Esophagus muscularis mucosa (tissue), 4 donors: ENCODE measurements at regions of chr10 and their contacts with region 1.

Region 1: DNA sequence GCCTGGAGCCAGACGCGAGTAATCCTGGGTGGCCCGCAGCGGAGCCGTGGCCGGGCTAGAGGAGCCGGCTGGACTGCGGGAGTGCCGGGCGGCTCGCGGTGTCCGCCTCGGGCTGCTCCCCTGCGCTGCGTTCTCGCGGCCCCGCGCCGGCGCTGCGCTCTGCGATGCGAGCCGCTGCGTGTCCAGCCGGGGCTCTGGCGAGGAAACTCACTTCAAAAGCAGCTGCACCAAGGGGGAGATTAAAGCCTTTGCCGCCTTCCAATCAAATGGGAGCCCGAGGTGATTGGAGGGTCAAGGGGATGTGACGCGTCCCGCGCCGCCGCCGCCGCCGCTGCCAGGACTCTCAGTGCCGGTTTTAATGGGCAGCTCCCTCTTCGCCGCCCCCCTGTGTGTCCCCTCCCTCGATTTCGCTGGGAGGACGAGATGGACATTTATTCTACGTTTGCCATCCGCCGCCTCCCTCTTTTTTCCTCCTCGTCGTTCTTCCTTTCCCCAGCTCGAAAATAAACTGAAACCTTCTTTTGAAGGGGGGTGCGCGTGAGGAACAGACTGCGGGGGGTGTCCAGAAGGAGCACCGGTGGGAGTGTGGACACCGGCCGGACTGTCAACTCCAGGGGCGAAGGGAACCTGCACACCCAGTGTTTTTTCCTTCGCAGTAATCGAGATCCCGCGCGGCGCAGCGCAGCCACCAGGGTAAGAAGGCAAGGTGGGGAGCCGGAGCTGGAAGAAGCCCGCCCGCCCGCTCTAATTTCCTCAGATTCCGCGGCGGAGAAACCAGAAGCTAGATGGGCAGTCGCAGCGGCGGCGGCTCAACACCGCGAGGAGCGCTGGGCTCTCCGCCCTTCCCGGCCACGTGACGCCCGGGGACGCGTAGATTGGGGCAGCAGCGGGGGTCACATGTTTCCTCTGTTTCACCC is at the start of gene ZNF503:
- DNase-seq: peak; percentile 99
- H3K4me3 ChIP-seq: peak within 1 kb of the TSS; percentile 86 to 100 (median 96)
- H3K27ac ChIP-seq: peak within 1 kb of the TSS; percentile 99 to 100 (median 100)
- H3K4me1 ChIP-seq: peaks cover 18 to 53% (median 45%) of the 10 kb centered on the region in 4 donors
- H3K27me3 ChIP-seq: peaks cover 0 to 11% (median 0%) of the 10 kb centered on the region in 4 donors
- CTCF ChIP-seq: peak in 2 of 3 experiments; percentile 32 to 42
- EP300 ChIP-seq: no peak
- POLR2A ChIP-seq: peak; percentile 84
- total RNA-seq, gene ZNF503: 21.2 to 101 (median 65.1) TPM

Region 2: DNA sequence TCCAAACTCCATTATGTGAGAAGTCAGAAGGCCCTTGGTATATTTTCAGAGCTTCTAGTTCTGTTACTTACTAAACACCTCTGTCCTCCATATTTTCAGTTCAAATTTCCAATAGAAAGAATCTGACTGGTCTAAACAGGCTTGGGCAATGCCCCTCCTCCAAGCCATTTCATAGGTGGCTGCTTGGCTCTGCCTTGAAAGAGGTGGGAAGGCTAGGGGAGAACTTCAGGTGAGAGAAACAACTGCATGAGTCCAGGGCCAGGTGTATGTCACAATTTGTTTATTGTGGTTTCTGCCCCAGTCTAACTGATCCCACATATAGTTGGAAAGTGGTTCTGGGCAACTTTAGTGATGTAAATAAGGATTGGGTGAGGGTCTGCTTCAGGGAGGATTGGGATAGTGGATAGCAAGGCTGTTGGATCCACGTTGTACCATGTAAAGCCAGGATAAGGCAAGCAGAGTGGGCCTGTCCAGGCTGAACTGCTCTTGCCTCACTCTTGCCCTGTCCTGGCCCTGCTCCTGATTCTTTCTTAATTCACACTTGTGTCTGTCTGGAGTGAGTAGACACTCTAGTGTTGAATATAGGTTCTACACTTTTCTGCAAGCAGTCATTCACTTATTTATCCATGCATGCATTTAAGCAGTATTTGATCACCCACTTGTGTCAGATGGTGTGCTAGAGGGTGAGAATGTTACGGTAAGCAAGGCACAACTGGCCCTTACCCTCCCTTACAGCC is 98.6 kb before region 1 on chr10:
- intact Hi-C with region 1: no loop called
- DNase-seq: no peak
- H3K4me3 ChIP-seq: no peak overlapping the region
- H3K27ac ChIP-seq: no peak overlapping the region
- H3K4me1 ChIP-seq: no peaks in the 10 kb centered on the region
- H3K27me3 ChIP-seq: no peaks in the 10 kb centered on the region
- CTCF ChIP-seq: no peak
- EP300 ChIP-seq: no peak
- POLR2A ChIP-seq: no peak

Region 3: DNA sequence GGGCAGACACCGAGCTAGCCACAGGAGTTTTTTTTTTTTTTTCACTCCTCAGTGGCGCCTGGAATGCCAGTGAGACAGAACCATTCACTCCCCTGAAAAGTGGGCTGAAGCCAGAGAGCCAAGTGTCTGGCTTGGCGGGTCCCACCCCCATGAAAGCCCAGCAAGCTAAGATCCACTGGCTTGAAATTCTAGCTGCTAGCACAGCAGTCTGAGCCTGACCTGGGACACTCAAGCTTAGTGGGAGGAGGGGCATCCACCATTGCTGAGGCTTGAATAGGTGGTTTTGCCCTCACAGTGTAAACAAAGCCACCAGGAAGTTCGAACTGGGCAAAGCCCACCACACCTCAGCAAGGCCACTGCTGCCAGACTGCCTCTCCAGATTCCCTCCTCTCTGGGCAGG is 174.1 kb after region 1 on chr10:
- intact Hi-C with region 1: no loop called
- DNase-seq: no peak
- H3K4me3 ChIP-seq: no peak overlapping the region
- H3K27ac ChIP-seq: no peak overlapping the region
- H3K4me1 ChIP-seq: no peaks in the 10 kb centered on the region
- H3K27me3 ChIP-seq: no peaks in the 10 kb centered on the region
- CTCF ChIP-seq: no peak
- EP300 ChIP-seq: no peak
- POLR2A ChIP-seq: no peak

Region 4: GRCh38 chr10:75612904-75613684 is 211.3 kb after region 1 on chr10:
- intact Hi-C with region 1: loop called (anchors 5 kb)
- DNase-seq: no peak
- H3K4me3 ChIP-seq: no peak overlapping the region
- H3K27ac ChIP-seq: peak overlapping the region; percentile 1 to 56 (median 28)
- H3K4me1 ChIP-seq: peaks cover 20 to 53% (median 49%) of the 10 kb centered on the region in 4 donors
- H3K27me3 ChIP-seq: no peaks in the 10 kb centered on the region
- CTCF ChIP-seq: no peak
- EP300 ChIP-seq: no peak
- POLR2A ChIP-seq: no peak

Region 5: DNA sequence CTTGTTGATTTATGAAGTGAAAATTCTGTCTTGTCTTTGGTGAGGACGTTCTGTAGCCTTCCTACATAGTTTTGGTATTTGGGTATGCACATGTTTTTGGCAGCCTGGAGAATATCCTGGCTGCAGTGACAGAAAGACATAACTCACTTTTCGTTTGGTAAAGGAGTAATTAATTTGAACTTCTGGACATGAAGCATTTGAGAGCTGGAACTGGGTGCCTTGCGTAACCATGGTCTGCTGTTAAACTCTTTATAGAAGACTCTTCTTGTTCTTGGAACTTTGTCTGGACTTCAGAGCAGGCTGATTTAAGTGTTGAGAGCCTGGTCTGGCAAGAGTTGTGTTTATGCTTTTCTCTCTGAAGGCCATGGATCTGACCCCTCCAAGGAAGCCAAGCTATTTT is 260.9 kb after region 1 on chr10:
- intact Hi-C with region 1: loop called (anchors 5 kb)
- DNase-seq: peak; percentile 93
- H3K4me3 ChIP-seq: peak overlapping the region in 1 of 4 donors; percentile 5
- H3K27ac ChIP-seq: peak overlapping the region; percentile 77 to 86 (median 84)
- H3K4me1 ChIP-seq: peaks cover 27 to 79% (median 70%) of the 10 kb centered on the region in 4 donors
- H3K27me3 ChIP-seq: no peaks in the 10 kb centered on the region
- CTCF ChIP-seq: no peak
- EP300 ChIP-seq: peak; percentile 67
- POLR2A ChIP-seq: no peak

Region 6: DNA sequence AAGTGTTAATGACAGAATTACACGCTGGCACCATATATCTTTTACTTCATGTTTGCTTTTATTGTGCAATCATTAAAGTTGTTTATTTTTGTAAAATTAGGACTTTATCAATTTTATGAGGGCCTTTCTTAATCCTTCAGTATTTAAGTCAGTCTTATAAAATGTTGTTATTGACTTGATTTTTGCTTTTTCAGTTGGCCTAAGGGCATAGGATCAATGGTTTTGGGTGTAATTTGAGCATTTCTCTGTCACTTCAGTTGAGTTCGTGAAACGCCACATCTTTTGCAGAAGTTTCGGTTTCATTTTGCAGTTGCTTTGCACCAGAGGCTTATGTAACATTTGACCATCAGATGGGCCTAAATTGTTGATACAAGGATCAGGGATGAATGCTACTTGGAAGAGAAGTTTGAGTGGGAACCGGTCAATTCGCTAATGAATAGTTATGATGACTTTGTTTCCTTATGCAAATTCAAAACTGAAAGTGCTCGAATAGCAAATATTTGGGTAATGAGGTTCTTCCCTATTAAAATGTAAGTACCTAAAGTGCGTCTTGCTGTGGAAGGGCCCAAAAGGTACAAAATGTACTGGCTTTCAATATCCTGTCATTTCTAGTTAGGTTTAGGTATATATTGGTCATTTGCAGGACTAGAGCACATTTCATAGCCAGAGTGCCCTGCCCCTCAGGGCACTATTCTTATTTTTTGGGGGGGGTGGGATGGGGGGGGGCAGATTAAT is 370.5 kb after region 1 on chr10:
- intact Hi-C with region 1: loop called (anchors 10 kb)
- DNase-seq: no peak
- H3K4me3 ChIP-seq: peak overlapping the region; percentile 6 to 43 (median 21)
- H3K27ac ChIP-seq: peak overlapping the region; percentile 56 to 74 (median 58)
- H3K4me1 ChIP-seq: peaks cover 5 to 65% (median 53%) of the 10 kb centered on the region in 4 donors
- H3K27me3 ChIP-seq: no peaks in the 10 kb centered on the region
- CTCF ChIP-seq: no peak
- EP300 ChIP-seq: no peak
- POLR2A ChIP-seq: no peak

Region 7: GRCh38 chr10:75910032-75910431 is 508.2 kb after region 1 on chr10:
- intact Hi-C with region 1: loop called (anchors 2 kb)
- DNase-seq: no peak
- H3K4me3 ChIP-seq: no peak overlapping the region
- H3K27ac ChIP-seq: no peak overlapping the region
- H3K4me1 ChIP-seq: no peaks in the 10 kb centered on the region
- H3K27me3 ChIP-seq: no peaks in the 10 kb centered on the region
- CTCF ChIP-seq: peak; percentile 48 to 56 (median 52)
- EP300 ChIP-seq: no peak
- POLR2A ChIP-seq: no peak

Region 8: DNA sequence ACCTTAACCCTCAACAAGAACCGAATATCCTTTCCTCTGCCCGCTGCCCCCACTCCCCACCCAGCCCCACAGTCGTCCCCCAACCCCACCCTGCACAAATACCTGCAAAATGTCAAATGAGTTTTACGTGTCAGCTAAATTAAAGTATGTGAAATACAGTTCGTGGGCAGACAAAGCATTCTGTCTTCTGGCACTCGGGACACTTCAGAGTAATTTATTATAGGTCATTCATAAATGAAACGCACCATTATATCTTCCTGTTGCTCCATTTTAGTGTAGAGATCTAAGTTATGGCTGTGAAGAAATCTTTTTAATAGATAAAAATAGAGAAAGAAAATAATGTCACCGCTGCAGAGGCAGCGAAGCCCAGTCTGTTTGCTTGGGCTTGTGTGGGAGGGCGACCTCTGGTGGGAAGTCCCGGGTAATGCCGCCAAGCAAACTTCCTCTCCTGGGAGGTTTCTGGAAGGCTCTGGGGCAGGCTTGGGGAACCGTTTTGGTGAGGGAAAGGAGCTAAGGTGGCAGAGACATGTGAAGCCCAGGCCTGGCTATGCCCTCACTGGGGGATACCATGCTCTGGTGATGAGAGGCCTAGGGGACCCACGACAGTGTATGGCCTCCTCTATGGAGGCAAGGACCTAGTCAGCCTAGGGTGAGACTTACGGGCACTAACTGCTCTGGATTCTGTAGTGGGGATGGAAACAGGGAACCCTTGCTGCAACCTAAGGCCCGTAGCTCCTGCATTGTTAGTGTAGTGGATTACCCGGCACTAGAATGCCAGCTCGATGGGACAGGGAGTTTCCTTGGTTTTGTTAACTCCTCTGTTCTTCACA is 634.5 kb after region 1 on chr10:
- intact Hi-C with region 1: loop called (anchors 5 kb)
- DNase-seq: peak; percentile 94
- H3K4me3 ChIP-seq: peak overlapping the region; percentile 25 to 48 (median 32)
- H3K27ac ChIP-seq: peak overlapping the region; percentile 40 to 74 (median 64)
- H3K4me1 ChIP-seq: peaks cover 6 to 42% (median 40%) of the 10 kb centered on the region in 4 donors
- H3K27me3 ChIP-seq: no peaks in the 10 kb centered on the region
- CTCF ChIP-seq: peak; percentile 97 to 99 (median 98)
- EP300 ChIP-seq: no peak
- POLR2A ChIP-seq: no peak

Region 9: GRCh38 chr10:76303682-76304316 is 902.0 kb after region 1 on chr10:
- intact Hi-C with region 1: loop called (anchors 5 kb)
- DNase-seq: peak; percentile 92
- H3K4me3 ChIP-seq: no peak overlapping the region
- H3K27ac ChIP-seq: peak overlapping the region in 1 of 4 donors; percentile 3
- H3K4me1 ChIP-seq: peaks cover 15 to 23% (median 19%) of the 10 kb centered on the region in 4 donors
- H3K27me3 ChIP-seq: no peaks in the 10 kb centered on the region
- CTCF ChIP-seq: peak; percentile 54 to 70 (median 67)
- EP300 ChIP-seq: no peak
- POLR2A ChIP-seq: no peak